ENCODE measurements at regions of chr2 and their contacts with region 1.

Region 1: DNA sequence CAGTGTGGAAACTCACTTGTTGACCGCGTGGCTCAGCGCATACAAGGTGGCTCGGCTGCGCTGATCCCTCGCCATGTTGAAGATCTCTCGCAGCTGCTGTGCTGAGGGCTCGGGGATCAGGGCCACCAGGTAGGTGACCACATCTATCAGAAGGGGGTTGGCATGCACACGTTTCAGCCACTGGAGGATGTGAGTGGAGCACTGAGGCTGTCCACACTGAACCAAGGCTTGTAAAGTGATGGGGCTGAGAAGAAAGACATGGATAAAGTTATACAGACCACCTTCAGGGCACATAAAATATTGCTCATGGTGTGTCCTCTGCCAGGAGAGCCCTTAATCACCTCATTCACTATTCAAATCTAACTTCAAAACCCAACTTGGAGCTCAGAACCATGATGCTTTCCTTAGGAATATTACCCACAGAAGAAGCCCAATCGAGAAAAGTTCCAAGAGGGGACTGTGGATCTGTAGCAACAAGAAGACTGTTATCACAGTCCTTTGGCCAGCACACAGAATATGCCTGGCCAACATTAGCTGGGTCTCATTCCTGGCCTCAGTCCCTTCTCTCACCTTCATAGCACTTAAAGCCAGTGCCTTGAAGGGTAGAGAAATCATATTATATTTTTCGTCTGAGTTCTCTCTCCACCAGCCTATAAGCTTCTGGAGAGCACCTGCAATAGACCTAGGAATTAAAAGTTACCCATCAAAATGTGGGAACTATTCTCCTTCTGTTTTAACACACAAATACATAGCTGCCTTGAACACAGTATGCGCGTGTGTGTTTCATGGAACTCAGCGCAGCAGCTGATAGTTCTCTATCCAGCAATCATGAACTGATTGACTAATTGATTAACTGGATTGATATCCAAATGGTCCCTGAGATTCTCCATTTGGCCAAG is 11.3 kb downstream of the APOB start:
- DNase-seq: no peak
- ATAC-seq: peak; percentile 8
- H3K4me3 ChIP-seq: peak overlapping the region in 1 of 3 experiments; percentile 14; a peak in 1 of 6 replicates
- H3K27ac ChIP-seq: peak overlapping the region; percentile 8
- H3K4me1 ChIP-seq: peaks cover 99% of the 10 kb centered on the region
- H3K27me3 ChIP-seq: no peaks in the 10 kb centered on the region
- CTCF ChIP-seq: no peak
- EP300 ChIP-seq: no peak
- POLR2A ChIP-seq: peak; percentile 59 to 73; a peak in 3 of 4 replicates
- RAD21 ChIP-seq: no peak

Region 2: GRCh38 chr2:21010813-21011439 is 21.7 kb before region 1 on chr2:
- CTCF ChIA-PET with region 1: no interaction called
- POLR2A ChIA-PET with region 1: interaction called, 119 read pairs
- in situ Hi-C with region 1: no loop called
- intact Hi-C with region 1: no loop called
- DNase-seq: no peak
- ATAC-seq: peak; percentile 0; the same call in 1 of the 3 replicates
- H3K4me3 ChIP-seq: no peak overlapping the region
- H3K27ac ChIP-seq: no peak overlapping the region
- H3K4me1 ChIP-seq: peaks cover 30% of the 10 kb centered on the region
- H3K27me3 ChIP-seq: no peaks in the 10 kb centered on the region
- CTCF ChIP-seq: no peak
- EP300 ChIP-seq: no peak
- POLR2A ChIP-seq: peak; percentile 57 to 74; a peak in 3 of 4 replicates
- RAD21 ChIP-seq: no peak

Region 3: DNA sequence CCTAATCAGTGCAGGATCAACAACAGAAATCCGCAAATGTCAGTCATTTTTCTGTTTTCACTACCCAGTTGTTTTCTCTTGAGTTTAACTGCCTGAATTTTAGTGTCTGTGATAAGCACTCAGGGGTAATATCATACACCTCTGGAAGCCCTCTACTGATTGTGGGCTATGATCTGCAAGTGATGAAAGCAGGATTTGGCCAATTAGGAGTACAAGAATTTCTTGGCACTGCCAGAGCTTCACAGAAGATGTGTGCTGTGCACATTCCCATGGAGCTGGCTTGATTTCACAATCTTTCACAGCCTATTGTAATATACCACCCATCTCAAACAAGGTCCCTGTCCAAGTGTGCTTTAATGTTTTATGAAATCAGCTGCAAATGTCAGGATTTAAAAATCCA is 63.9 kb after region 1 on chr2:
- CTCF ChIA-PET with region 1: no interaction called
- POLR2A ChIA-PET with region 1: interaction called, 50 read pairs
- in situ Hi-C with region 1: no loop called
- intact Hi-C with region 1: no loop called
- DNase-seq: peak; percentile 89
- ATAC-seq: peak; percentile 75
- H3K4me3 ChIP-seq: no peak overlapping the region
- H3K27ac ChIP-seq: peak overlapping the region; percentile 36
- H3K4me1 ChIP-seq: peaks cover 71% of the 10 kb centered on the region
- H3K27me3 ChIP-seq: no peaks in the 10 kb centered on the region
- CTCF ChIP-seq: no peak
- EP300 ChIP-seq: peak; percentile 34 to 37; a peak in 1 of 4 replicates
- POLR2A ChIP-seq: no peak
- RAD21 ChIP-seq: no peak

Region 4: DNA sequence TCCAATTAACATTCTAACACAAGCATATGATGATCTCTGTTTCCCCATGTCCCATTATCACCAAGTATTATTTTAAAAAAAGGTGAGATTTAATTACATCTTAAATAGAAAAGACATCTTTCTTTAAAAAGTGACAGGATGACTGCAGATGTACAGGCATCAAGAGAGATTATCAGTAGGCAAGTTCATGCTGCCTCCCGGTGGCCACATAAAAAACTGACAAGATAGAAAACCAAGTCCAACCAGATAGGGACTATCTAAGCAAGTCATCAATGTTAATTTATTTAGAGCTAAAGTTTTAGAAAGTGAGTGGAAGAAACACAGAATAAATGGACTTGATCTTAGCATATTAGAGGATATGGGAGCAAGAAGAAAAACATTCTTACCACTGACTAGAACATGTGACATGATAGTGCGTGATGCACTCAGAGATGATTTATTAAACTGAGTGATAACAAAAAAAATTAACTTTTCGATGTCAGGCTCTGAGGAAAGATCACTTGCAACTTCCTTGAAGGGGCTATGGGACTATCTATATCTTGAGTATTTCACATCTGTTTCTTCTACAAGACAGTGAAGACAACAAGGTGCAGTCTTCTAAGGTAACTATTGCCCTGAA is 85.8 kb after region 1 on chr2:
- CTCF ChIA-PET with region 1: no interaction called
- POLR2A ChIA-PET with region 1: interaction called, 49 read pairs
- in situ Hi-C with region 1: no loop called
- intact Hi-C with region 1: no loop called
- DNase-seq: peak; percentile 81
- ATAC-seq: peak; percentile 98
- H3K4me3 ChIP-seq: no peak overlapping the region
- H3K27ac ChIP-seq: no peak overlapping the region
- H3K4me1 ChIP-seq: peaks cover 22% of the 10 kb centered on the region
- H3K27me3 ChIP-seq: no peaks in the 10 kb centered on the region
- CTCF ChIP-seq: peak; percentile 89
- EP300 ChIP-seq: peak in 1 of 2 experiments; percentile 36; a peak in 1 of 4 replicates
- POLR2A ChIP-seq: no peak
- RAD21 ChIP-seq: peak; percentile 91

Region 5: GRCh38 chr2:21131861-21132260 is 99.3 kb after region 1 on chr2:
- CTCF ChIA-PET with region 1: no interaction called
- POLR2A ChIA-PET with region 1: no interaction called
- in situ Hi-C with region 1: no loop called
- intact Hi-C with region 1: no loop called
- DNase-seq: no peak
- ATAC-seq: no peak
- H3K4me3 ChIP-seq: no peak overlapping the region
- H3K27ac ChIP-seq: no peak overlapping the region
- H3K4me1 ChIP-seq: peaks cover 2% of the 10 kb centered on the region
- H3K27me3 ChIP-seq: no peaks in the 10 kb centered on the region; a peak in 1 of 5 replicates
- CTCF ChIP-seq: no peak
- EP300 ChIP-seq: no peak
- POLR2A ChIP-seq: no peak
- RAD21 ChIP-seq: no peak

Region 6: DNA sequence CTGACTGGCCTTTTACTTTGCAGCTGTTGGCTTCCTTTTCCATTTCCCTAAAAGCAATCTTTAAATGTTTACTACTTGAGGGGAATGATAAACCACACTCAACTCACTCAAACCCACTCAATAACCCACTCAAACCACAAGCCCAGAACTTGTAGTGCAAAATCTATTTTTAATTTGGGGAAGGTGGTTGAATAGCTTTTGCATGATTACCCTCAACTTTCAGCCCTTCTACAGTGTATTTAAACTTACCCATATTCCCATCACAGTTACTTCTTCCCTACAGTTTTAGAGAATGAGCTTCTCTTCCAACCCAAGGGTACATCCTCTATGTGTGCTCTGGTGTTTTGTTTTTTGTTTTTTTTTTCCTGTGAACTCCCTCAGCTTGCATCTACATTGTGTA is 727.2 kb after region 1 on chr2:
- CTCF ChIA-PET with region 1: no interaction called
- POLR2A ChIA-PET with region 1: no interaction called
- in situ Hi-C with region 1: no loop called
- intact Hi-C with region 1: no loop called
- DNase-seq: no peak
- ATAC-seq: no peak
- H3K4me3 ChIP-seq: no peak overlapping the region
- H3K27ac ChIP-seq: no peak overlapping the region
- H3K4me1 ChIP-seq: no peaks in the 10 kb centered on the region
- H3K27me3 ChIP-seq: no peaks in the 10 kb centered on the region
- CTCF ChIP-seq: no peak
- EP300 ChIP-seq: no peak
- POLR2A ChIP-seq: no peak
- RAD21 ChIP-seq: no peak